ENCODE measurements at regions of chr16 and their contacts with region 1.

Region 1: GRCh38 chr16:80717611-80718010 is 86.8 kb downstream of the CDYL2 start:
- DNase-seq: no peak
- ATAC-seq: no peak
- H3K4me3 ChIP-seq: no peak overlapping the region
- H3K27ac ChIP-seq: no peak overlapping the region
- H3K4me1 ChIP-seq: peaks cover 0 to 9% (median 0%) of the 10 kb centered on the region in 12 donors
- H3K27me3 ChIP-seq: no peaks in the 10 kb centered on the region
- CTCF ChIP-seq: no peak
- POLR2A ChIP-seq: no peak

Region 2: GRCh38 chr16:80639641-80640040 is 78.0 kb before region 1 on chr16:
- intact Hi-C with region 1: no loop called
- DNase-seq: no peak
- ATAC-seq: no peak
- H3K4me3 ChIP-seq: no peak overlapping the region
- H3K27ac ChIP-seq: no peak overlapping the region
- H3K4me1 ChIP-seq: no peaks in the 10 kb centered on the region
- H3K27me3 ChIP-seq: no peaks in the 10 kb centered on the region
- CTCF ChIP-seq: no peak
- POLR2A ChIP-seq: no peak

Region 3: GRCh38 chr16:80672379-80672778 is 45.2 kb before region 1 on chr16:
- intact Hi-C with region 1: loop called in 1 of 10 experiments (anchors 2 kb)
- DNase-seq: no peak
- ATAC-seq: no peak
- H3K4me3 ChIP-seq: no peak overlapping the region
- H3K27ac ChIP-seq: no peak overlapping the region
- H3K4me1 ChIP-seq: peaks cover 0 to 24% (median 0%) of the 10 kb centered on the region in 12 donors
- H3K27me3 ChIP-seq: no peaks in the 10 kb centered on the region
- CTCF ChIP-seq: no peak
- POLR2A ChIP-seq: no peak

Region 4: DNA sequence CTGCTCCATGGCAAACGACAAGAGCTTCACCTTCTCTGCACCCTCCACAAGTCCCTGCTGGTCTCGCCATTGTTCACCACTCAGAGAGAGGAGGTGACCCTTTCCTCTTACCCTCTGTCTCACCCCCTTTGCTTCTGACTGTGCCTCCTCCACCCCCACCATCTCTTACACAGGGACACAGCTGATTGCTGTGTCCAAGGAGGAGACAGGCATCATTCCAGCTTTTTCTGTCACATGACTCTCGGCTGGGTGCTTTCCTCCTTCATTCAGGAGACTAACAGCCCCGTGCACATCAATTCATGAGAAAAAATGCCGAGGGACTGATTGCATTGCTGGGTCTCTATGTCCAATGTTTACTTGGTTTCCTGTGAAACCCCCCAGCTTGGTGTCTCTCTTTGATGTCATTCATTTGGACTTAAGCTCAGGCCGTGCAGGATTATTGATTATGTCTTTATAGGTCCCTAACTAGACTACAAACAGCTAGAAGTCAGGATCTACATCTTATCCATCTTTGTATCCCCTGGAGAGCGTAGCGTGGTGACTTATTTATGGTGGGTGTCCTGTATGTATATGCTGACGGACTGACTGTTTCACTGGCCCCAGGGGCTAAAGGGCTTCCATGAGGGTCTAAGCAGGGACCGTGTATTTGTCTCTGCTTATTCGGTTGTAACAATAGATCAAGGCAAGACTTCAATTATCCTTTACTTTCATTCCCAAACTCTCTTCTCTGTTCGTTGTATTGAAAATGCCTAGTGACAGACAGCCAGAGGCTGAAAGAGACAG is 1827.0 kb after region 1 on chr16:
- intact Hi-C with region 1: no loop called
- DNase-seq: no peak
- ATAC-seq: peak in 3 of 4 donors; percentile 50 to 66 (median 61)
- H3K4me3 ChIP-seq: no peak overlapping the region
- H3K27ac ChIP-seq: no peak overlapping the region
- H3K4me1 ChIP-seq: peaks cover 0 to 14% (median 0%) of the 10 kb centered on the region in 12 donors
- H3K27me3 ChIP-seq: peaks cover 0 to 4% (median 0%) of the 10 kb centered on the region in 9 donors
- CTCF ChIP-seq: no peak
- POLR2A ChIP-seq: no peak